MCF 10A (cell line): ENCODE measurements at regions of chr12 and their contacts with region 1.

Region 1: DNA sequence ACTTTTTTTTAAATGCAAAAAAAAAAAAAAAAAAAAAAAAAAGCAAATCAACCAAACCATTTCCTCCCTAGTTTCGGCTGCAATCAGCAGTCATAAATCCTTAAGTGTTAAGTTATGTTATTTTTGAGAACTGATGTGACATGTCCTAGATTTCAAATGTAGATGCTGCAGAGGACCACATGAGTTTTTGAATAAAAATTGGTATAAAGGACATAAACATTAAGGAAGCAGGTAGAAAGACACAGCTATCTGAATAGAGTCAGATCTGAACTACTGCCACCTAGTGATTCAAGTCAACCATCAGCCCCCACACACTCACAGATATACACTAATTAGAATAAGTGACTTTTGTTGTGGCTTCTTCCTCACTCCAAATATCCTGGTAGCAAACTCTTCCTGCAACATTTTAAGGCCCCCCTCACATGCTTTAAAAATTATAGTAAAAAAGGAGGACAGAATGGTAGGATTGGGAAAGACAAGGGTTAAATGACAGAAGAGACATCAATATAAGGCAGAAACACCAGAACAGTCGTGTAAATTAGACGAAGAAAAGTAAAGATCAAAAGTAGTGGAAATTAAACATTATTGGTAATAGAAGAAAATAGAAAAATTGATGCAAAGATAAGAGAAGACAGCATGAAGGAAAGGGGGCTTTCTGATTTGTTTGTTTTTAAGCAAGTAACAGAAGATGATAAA is 394.5 kb upstream of the ATP2B1 start:
- DNase-seq: peak; percentile 53
- H3K4me3 Mint-ChIP-seq: no peak overlapping the region
- H3K27ac Mint-ChIP-seq: no peak overlapping the region
- H3K4me1 Mint-ChIP-seq: peaks cover 10% of the 10 kb centered on the region
- H3K27me3 Mint-ChIP-seq: no peaks in the 10 kb centered on the region
- CTCF ChIP-seq: peak; percentile 36

Region 2: GRCh38 chr12:89893972-89894706 is 209.0 kb before region 1 on chr12:
- CTCF ChIA-PET with region 1: no interaction called
- POLR2A ChIA-PET with region 1: no interaction called
- intact Hi-C with region 1: loop called (anchors 5 kb)
- DNase-seq: peak; percentile 42
- H3K4me3 Mint-ChIP-seq: no peak overlapping the region
- H3K27ac Mint-ChIP-seq: peak overlapping the region; percentile 80
- H3K4me1 Mint-ChIP-seq: peaks cover 17% of the 10 kb centered on the region
- H3K27me3 Mint-ChIP-seq: no peaks in the 10 kb centered on the region
- CTCF ChIP-seq: no peak

Region 3: DNA sequence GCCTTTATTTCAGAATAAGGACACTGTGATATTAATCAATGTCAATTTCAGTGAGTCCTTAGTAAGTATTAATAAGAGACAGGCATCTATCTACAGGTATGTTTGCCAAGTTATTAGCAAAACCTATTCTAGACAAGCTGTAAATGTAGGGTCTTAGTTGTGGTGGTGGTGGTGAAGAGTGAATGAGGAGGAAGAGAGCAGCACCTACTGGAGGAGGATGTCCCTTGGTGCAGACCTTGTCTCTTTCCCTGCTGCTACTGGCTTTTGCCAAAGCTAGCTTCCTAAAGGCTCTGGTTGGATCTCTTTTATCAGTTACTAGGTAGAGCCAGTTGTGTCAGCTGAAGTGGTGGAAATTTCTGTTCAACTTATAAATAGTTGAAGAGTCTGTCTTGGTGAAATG is 89.7 kb before region 1 on chr12:
- CTCF ChIA-PET with region 1: interaction called, 3 read pairs
- POLR2A ChIA-PET with region 1: no interaction called
- intact Hi-C with region 1: loop called (anchors 1 kb)
- DNase-seq: no peak
- H3K4me3 Mint-ChIP-seq: no peak overlapping the region
- H3K27ac Mint-ChIP-seq: no peak overlapping the region
- H3K4me1 Mint-ChIP-seq: peaks cover 9% of the 10 kb centered on the region
- H3K27me3 Mint-ChIP-seq: no peaks in the 10 kb centered on the region
- CTCF ChIP-seq: no peak

Region 4: GRCh38 chr12:90024287-90024686 is 78.8 kb before region 1 on chr12:
- CTCF ChIA-PET with region 1: no interaction called
- POLR2A ChIA-PET with region 1: no interaction called
- intact Hi-C with region 1: no loop called
- DNase-seq: peak; percentile 27
- H3K4me3 Mint-ChIP-seq: no peak overlapping the region
- H3K27ac Mint-ChIP-seq: no peak overlapping the region
- H3K4me1 Mint-ChIP-seq: peaks cover 17% of the 10 kb centered on the region
- H3K27me3 Mint-ChIP-seq: no peaks in the 10 kb centered on the region
- CTCF ChIP-seq: no peak

Region 5: GRCh38 chr12:90909069-90909770 is 806.1 kb after region 1 on chr12:
- CTCF ChIA-PET with region 1: interaction called, 4 read pairs
- POLR2A ChIA-PET with region 1: no interaction called
- intact Hi-C with region 1: loop called (anchors 5 kb)
- DNase-seq: peak; percentile 68
- H3K4me3 Mint-ChIP-seq: no peak overlapping the region
- H3K27ac Mint-ChIP-seq: no peak overlapping the region
- H3K4me1 Mint-ChIP-seq: peaks cover 17% of the 10 kb centered on the region
- H3K27me3 Mint-ChIP-seq: no peaks in the 10 kb centered on the region
- CTCF ChIP-seq: peak; percentile 45